CD8-positive, alpha-beta T cell (primary cell): ENCODE measurements at regions of chr10 and their contacts with region 1.

Region 1: DNA sequence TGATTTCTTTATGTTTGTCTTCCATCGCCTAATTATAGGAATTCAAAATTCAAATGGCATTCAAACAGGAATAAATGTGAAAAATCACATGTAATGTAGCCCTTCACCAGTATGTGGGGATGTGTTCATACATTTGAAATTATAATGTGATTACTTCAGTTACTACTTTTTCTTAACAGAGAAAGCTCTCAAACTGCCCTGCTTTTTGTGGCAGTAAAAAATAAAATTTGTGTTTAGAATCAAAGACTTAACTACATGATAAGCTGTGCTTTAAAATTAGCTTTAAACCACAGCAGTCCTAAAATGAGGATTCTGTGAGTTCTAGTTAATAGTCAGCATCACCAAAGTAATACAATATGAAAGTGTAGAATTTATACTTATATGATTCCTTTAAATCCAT is 7.8 kb upstream of the HERC4 start:
- DNase-seq: no peak
- ATAC-seq: no peak
- H3K4me3 ChIP-seq: no peak overlapping the region
- H3K4me3 Mint-ChIP-seq: no peak overlapping the region
- H3K27ac ChIP-seq: no peak overlapping the region
- H3K27ac Mint-ChIP-seq: no peak overlapping the region
- H3K4me1 ChIP-seq: no peaks in the 10 kb centered on the region
- H3K4me1 Mint-ChIP-seq: no peaks in the 10 kb centered on the region
- H3K27me3 ChIP-seq: no peaks in the 10 kb centered on the region
- H3K27me3 Mint-ChIP-seq: peaks cover 13% of the 10 kb centered on the region
- CTCF ChIP-seq: no peak

Region 2: GRCh38 chr10:68156373-68157185 is 73.7 kb after region 1 on chr10:
- CTCF ChIA-PET with region 1: no interaction called
- POLR2A ChIA-PET with region 1: no interaction called
- intact Hi-C with region 1: loop called in 1 of 2 experiments (anchors 5 kb)
- DNase-seq: peak; percentile 12 to 77 (median 58)
- ATAC-seq: peak; percentile 71
- H3K4me3 ChIP-seq: no peak overlapping the region
- H3K4me3 Mint-ChIP-seq: no peak overlapping the region
- H3K27ac ChIP-seq: no peak overlapping the region
- H3K27ac Mint-ChIP-seq: no peak overlapping the region
- H3K4me1 ChIP-seq: no peaks in the 10 kb centered on the region
- H3K4me1 Mint-ChIP-seq: no peaks in the 10 kb centered on the region
- H3K27me3 ChIP-seq: no peaks in the 10 kb centered on the region
- H3K27me3 Mint-ChIP-seq: peaks cover 5% of the 10 kb centered on the region
- CTCF ChIP-seq: peak; percentile 94

Region 3: DNA sequence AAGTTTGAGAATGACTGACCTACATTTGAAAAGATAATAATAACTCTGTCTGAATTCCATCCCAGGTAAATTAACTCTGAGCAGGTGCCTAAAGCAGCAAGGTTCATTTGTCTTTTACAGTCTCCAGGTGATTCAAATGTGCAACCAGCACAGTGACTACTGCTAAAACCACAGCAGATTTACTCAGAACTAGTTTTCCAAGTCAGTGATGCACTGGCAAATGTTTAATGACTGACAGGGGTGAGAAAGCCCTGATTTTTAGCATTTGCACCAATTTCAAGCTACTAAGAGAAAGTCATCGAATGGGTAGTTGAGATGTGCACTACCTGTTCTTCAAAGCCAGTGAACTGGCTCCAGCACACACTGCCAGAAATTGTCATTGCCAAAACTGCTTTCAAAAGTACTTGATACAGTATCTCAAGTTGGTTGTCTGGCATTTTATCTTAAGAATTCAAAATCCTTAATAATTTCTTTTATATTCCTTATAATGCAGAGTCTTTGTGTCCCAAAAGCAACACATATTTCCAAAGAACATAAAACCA is 88.7 kb after region 1 on chr10:
- CTCF ChIA-PET with region 1: no interaction called
- POLR2A ChIA-PET with region 1: no interaction called
- intact Hi-C with region 1: no loop called
- DNase-seq: no peak
- ATAC-seq: no peak
- H3K4me3 ChIP-seq: no peak overlapping the region
- H3K4me3 Mint-ChIP-seq: no peak overlapping the region
- H3K27ac ChIP-seq: no peak overlapping the region
- H3K27ac Mint-ChIP-seq: no peak overlapping the region
- H3K4me1 ChIP-seq: no peaks in the 10 kb centered on the region
- H3K4me1 Mint-ChIP-seq: no peaks in the 10 kb centered on the region
- H3K27me3 ChIP-seq: no peaks in the 10 kb centered on the region
- H3K27me3 Mint-ChIP-seq: peaks cover 2% of the 10 kb centered on the region
- CTCF ChIP-seq: no peak